WTC11 (cell line): ENCODE measurements at regions of chrX and their contacts with region 1.

Region 1: DNA sequence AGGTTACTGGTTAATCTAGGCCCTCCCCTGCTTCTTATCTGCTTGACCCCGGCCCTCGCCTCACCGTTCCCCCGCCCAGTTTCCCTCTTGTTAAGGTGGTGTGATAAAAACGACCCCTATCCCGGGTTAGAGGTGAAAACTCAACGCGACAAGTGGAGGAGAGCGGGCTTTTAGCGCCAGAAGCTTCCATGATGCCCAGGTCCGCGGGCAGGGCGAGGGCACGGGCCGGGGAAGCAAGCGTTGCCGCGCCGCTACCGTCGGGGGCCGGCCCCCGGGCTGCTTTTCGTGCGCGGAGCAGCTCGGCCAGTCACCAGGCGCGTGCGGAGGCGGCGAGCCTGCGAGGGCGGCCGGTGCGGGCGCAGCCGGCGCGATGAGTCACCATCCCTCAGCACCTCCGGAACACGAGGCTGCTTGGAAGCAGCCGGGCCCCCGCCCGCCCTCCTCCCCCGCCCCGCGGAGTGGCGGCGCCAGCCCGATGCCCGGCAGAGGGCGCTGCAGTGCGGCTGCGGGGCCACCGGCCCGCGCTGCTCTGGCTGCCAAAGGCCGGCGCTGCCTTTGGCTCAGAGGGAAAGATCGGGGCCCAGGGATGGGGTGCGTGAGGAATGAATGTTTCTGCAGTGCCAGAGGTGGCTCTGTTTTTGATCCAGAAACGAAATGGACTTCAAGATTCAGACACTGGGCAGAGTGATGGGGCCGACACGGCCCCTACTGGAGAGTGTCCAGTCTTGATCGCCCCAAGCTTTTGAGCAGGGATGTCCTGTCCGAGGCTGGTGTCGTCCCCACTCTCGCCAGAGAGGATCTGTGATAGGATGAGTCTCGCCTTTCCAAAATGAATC is 107.8 kb downstream of the NHSL2 start:
- DNase-seq: peak; percentile 76
- ATAC-seq: peak; percentile 86
- H3K4me3 Mint-ChIP-seq: peak overlapping the region; percentile 30
- H3K27ac Mint-ChIP-seq: no peak overlapping the region
- H3K4me1 Mint-ChIP-seq: peaks cover 16% of the 10 kb centered on the region
- H3K27me3 Mint-ChIP-seq: peaks cover 17% of the 10 kb centered on the region
- CTCF ChIP-seq: peak; percentile 55

Region 2: GRCh38 chrX:71976753-71977152 is 41.7 kb before region 1 on chrX:
- CTCF ChIA-PET with region 1: no interaction called
- POLR2A ChIA-PET with region 1: no interaction called
- DNase-seq: no peak
- ATAC-seq: no peak
- H3K4me3 Mint-ChIP-seq: no peak overlapping the region
- H3K27ac Mint-ChIP-seq: peak overlapping the region; percentile 73; the same call in 1 of the 2 replicates
- H3K4me1 Mint-ChIP-seq: peaks cover 42% of the 10 kb centered on the region
- H3K27me3 Mint-ChIP-seq: no peaks in the 10 kb centered on the region
- CTCF ChIP-seq: no peak

Region 3: GRCh38 chrX:72003811-72004750 is 14.4 kb before region 1 on chrX:
- CTCF ChIA-PET with region 1: interaction called, 14 read pairs
- POLR2A ChIA-PET with region 1: no interaction called
- DNase-seq: peak; percentile 73
- ATAC-seq: peak; percentile 90
- H3K4me3 Mint-ChIP-seq: peak overlapping the region; percentile 43
- H3K27ac Mint-ChIP-seq: peak overlapping the region; percentile 73
- H3K4me1 Mint-ChIP-seq: peaks cover 55% of the 10 kb centered on the region
- H3K27me3 Mint-ChIP-seq: no peaks in the 10 kb centered on the region; the same call in 1 of the 2 replicates
- CTCF ChIP-seq: no peak

Region 4: DNA sequence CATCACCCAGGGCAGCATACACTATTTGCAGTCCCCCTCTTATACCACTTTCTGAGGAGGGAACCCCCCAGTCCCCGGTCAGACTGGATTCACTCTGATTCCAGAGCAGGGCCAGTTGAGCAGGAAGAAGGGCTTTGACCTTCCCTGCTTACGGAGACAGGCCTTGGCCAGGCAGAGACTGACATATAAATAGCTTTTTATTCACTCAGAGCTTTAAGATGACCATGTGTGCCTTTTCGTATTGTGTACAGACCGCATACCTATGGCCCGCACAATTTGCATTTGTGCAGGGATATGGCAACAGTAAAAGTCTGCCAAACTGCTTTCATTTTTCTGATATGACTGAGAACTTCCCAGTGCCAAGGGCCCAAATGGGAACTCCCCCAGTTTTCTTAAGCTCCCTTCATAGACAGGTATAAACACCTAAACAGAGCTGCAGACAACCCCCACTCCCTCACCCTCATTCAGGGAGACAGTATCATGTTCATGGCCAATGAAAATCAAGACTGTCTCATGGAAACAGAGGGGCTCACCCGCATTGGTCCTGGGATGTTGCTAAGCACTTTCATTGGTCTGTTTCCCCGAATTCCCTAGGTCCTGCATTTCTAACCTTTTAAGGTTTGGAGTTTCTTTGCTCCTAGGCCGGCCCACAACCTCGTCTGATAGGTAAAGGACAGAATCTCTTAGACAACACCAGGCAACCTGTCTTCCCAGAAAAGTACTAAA is 27.2 kb after region 1 on chrX:
- CTCF ChIA-PET with region 1: interaction called, 12 read pairs
- POLR2A ChIA-PET with region 1: no interaction called
- DNase-seq: peak; percentile 41
- ATAC-seq: peak; percentile 96
- H3K4me3 Mint-ChIP-seq: peak overlapping the region; percentile 22
- H3K27ac Mint-ChIP-seq: peak overlapping the region; percentile 94
- H3K4me1 Mint-ChIP-seq: peaks cover 48% of the 10 kb centered on the region
- H3K27me3 Mint-ChIP-seq: no peaks in the 10 kb centered on the region
- CTCF ChIP-seq: no peak

Region 5: GRCh38 chrX:72069350-72070160 is 51.1 kb after region 1 on chrX:
- CTCF ChIA-PET with region 1: interaction called, 11 read pairs
- POLR2A ChIA-PET with region 1: no interaction called
- DNase-seq: no peak
- ATAC-seq: peak; percentile 14
- H3K4me3 Mint-ChIP-seq: no peak overlapping the region; the same call in 1 of the 2 replicates
- H3K27ac Mint-ChIP-seq: no peak overlapping the region
- H3K4me1 Mint-ChIP-seq: peaks cover 25% of the 10 kb centered on the region
- H3K27me3 Mint-ChIP-seq: no peaks in the 10 kb centered on the region
- CTCF ChIP-seq: no peak